Mucosa of descending colon (tissue), 3 donors: ENCODE measurements at regions of chr3 and their contacts with region 1.

Region 1: GRCh38 chr3:150495563-150496168 is 50.6 kb downstream of the SERP1 start:
- DNase-seq: peak in 1 of 3 donors; percentile 66
- ATAC-seq: peak; percentile 64
- H3K4me3 ChIP-seq: no peak overlapping the region
- H3K4me1 ChIP-seq: no peaks in the 10 kb centered on the region
- CTCF ChIP-seq: peak; percentile 48

Region 2: DNA sequence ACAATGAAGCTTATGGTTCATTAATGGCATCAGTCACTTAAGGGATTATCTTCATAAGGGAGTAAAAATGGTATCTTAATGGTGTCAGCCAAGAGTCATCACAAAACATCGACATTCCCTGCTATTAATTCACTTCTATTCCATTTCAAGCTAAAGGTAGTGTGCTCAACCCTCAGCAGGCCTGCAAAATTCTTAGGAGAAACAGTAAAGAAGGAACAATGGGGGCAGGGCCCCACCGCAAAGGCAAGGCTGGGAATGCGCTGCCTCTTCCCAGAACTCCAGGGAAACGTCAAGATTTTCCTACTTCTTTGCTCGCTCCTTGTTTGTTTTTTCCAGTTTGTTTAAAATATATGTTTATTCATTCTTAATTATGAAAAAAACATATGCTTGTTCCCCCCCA is 274.9 kb before region 1 on chr3:
- intact Hi-C with region 1: loop called (anchors 5 kb)
- DNase-seq: no peak
- ATAC-seq: no peak
- H3K4me3 ChIP-seq: no peak overlapping the region
- H3K4me1 ChIP-seq: peaks cover 3% of the 10 kb centered on the region
- CTCF ChIP-seq: no peak

Region 3: GRCh38 chr3:150227839-150228238 is 267.8 kb before region 1 on chr3:
- intact Hi-C with region 1: loop called (anchors 5 kb)
- DNase-seq: peak in 2 of 3 donors; percentile 47 to 86
- ATAC-seq: peak; percentile 81
- H3K4me3 ChIP-seq: no peak overlapping the region
- H3K4me1 ChIP-seq: no peaks in the 10 kb centered on the region
- CTCF ChIP-seq: peak; percentile 42

Region 4: DNA sequence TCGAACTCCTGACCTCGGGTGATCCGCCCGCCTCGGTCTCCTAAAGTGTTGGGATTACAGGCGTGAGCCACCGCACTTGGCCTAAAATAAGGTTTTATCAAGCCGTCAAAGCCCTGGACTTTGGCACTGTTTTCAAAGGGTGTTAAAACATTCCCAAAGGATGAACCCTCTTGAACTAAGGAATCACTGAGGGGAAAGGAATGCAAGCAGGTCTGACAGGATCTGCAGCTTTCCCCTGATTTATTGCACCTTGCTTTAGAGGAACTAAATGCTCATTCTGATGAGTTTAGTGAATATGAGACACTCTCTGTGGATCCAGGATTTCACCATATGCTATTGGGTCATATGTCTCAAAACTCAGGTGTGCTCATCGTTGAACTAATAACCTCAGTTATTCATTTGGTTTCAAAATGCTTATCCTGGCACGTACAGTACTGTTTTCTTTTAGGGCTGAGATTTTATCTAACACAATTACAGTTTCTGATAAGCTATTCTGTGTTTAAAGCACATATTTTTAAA is 150.6 kb before region 1 on chr3:
- intact Hi-C with region 1: no loop called
- DNase-seq: peak; percentile 54 to 96 (median 68)
- ATAC-seq: peak; percentile 92
- H3K4me3 ChIP-seq: peak overlapping the region; percentile 3
- H3K4me1 ChIP-seq: no peaks in the 10 kb centered on the region
- CTCF ChIP-seq: no peak

Region 5: DNA sequence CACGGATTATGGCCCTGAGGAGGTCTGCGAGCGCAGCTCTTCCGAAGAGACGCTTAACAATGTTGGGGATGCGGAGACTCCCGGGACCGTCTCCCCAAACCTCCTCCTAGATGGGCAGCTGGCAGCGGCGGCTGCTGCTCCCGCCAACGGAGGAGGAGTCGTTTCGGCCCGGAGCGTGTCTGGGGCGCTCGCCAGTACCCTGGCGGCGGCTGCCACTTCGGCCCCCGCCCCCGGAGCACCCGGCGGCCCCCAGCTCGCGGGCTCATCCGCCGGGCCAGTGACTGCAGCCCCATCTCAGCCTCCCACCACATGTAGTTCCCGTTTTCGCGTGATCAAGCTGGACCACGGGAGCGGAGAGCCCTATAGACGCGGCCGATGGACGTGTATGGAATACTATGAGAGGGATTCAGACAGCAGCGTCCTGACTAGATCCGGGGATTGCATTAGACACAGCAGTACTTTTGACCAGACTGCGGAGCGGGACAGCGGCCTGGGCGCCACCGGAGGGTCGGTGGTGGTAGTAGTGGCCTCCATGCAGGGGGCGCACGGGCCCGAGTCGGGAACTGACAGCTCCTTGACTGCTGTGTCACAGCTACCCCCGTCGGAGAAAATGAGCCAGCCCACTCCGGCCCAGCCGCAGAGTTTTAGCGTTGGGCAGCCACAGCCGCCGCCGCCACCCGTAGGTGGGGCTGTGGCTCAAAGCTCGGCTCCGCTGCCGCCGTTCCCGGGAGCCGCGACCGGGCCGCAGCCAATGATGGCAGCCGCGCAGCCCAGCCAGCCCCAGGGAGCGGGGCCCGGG is 86.0 kb before region 1 on chr3:
- intact Hi-C with region 1: loop called (anchors 2 to 10 kb)
- DNase-seq: peak; percentile 75 to 87 (median 85)
- ATAC-seq: peak; percentile 56
- H3K4me3 ChIP-seq: peak overlapping the region; percentile 74
- H3K4me1 ChIP-seq: peaks cover 8% of the 10 kb centered on the region
- CTCF ChIP-seq: peak; percentile 37